Activated naive CD4-positive, alpha-beta T cell treated with anti-CD3 and anti-CD28 coated beads for 36 hours (primary cell): ENCODE measurements at regions of chr4 and their contacts with region 1.

Region 1: DNA sequence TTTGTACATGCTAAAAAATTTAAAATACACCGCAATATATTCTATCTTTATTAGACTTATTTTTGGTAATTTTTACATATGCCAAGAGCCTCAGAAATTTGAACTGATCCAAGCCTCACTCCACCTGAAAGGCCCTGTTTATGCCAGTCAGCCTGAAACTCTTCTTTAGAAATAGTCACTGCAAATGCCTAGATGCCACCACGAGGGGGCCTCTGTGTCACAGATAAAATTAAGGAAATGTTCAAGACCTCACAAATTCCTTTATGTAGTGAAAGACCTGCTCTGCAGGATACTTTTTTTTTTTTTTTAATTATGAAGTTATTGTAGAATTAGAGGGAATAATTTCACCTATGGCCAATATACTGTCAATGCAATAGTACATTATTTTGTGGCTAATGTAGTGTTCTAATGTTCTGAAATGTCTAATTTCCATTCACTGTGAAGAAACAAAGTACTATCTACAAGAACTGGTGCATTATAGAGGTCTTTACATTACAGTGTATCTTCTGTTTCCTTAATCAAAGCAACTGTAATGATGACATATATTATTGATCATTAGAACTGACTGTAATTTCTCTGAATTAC is 69.8 kb downstream of the DTHD1 start:
- DNase-seq: peak; percentile 89
- H3K4me3 Mint-ChIP-seq: no peak overlapping the region
- H3K27ac Mint-ChIP-seq: no peak overlapping the region
- H3K4me1 Mint-ChIP-seq: peaks cover 15% of the 10 kb centered on the region
- H3K27me3 Mint-ChIP-seq: peaks cover 4% of the 10 kb centered on the region

Region 2: DNA sequence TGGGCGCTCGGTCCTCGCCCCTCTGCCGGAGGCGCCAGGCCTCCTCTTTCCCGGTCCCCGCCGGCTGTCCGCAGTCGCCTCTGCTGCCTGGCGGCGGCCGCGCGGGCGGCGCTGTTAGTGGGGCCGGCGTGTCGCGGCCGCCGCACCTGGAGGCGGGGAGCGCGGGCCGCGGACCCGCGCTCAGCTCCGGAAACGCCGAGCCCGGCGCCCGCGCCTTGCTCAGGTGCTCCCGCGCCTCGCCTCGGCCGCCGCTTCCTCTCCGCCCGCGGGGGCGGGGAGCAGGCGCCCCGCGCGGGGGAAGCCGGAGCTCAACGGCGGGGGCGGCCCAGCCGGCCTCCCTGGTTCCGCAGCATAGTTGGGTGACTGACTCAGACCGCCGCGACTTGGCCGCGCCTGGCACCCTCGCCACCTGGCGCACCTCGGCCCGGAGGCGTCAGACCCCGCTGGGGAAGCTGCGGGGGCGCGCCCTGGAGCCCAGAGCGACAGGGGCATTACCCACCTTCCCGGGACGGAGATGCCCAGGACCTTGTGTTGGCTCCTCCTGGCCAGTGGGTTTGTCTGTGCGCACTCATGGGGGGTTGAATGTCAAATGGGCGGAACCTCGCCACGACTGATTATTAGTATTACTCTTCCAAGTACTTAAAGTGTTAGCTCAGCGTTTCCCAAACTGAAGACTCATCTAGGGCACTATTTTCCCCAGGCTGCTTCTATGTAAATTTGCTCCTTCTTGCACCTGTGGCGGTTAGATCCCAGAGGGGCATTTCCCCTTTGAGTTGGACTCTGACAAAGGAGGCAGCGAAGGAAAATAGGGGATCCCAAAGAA is 106.7 kb before region 1 on chr4 and contains the start of gene ARAP2:
- CTCF ChIA-PET with region 1: interaction called, 3 read pairs
- intact Hi-C with region 1: loop called (anchors 1 kb)
- DNase-seq: peak; percentile 77
- H3K4me3 Mint-ChIP-seq: peak within 1 kb of the TSS; percentile 94
- H3K27ac Mint-ChIP-seq: peak within 1 kb of the TSS; percentile 88
- H3K4me1 Mint-ChIP-seq: peaks cover 24% of the 10 kb centered on the region
- H3K27me3 Mint-ChIP-seq: no peaks in the 10 kb centered on the region
- total RNA-seq, gene ARAP2: 29.6 to 38.2 TPM

Region 3: GRCh38 chr4:36332023-36332781 is 19.0 kb before region 1 on chr4:
- CTCF ChIA-PET with region 1: interaction called, 6 read pairs
- intact Hi-C with region 1: loop called (anchors 1 kb)
- DNase-seq: peak; percentile 56
- H3K4me3 Mint-ChIP-seq: no peak overlapping the region
- H3K27ac Mint-ChIP-seq: peak overlapping the region; percentile 73
- H3K4me1 Mint-ChIP-seq: peaks cover 23% of the 10 kb centered on the region
- H3K27me3 Mint-ChIP-seq: no peaks in the 10 kb centered on the region

Region 4: DNA sequence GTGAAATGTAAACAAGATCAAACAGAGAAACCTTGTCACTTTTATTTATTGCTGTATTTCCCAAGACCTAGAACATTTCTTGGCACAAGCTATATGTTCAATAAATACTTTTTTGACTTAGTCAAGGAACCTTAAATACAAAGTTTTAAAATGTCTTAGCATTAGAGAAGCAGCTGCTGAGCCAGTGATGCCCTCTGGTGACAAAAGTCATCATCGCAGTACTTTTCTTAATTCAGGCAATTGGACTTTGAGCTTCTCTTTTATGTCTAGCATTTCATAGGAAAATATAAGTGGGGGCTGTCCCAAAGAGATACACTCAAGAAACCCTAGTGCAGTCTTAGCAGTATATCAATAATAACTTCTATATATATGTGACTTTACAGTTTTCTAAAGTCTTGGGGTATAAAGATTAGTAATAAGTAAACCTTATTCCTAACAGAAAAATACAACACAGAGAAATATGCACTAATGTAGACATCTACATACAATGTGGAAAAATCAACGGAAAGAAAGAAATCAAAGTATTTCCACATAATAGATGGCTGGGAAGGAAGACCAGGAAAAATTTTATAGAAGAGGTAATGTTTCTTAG is 48.7 kb after region 1 on chr4:
- CTCF ChIA-PET with region 1: interaction called, 92 read pairs
- intact Hi-C with region 1: loop called (anchors 1 kb)
- DNase-seq: peak; percentile 76
- H3K4me3 Mint-ChIP-seq: no peak overlapping the region
- H3K27ac Mint-ChIP-seq: no peak overlapping the region
- H3K4me1 Mint-ChIP-seq: peaks cover 19% of the 10 kb centered on the region
- H3K27me3 Mint-ChIP-seq: no peaks in the 10 kb centered on the region

Region 5: DNA sequence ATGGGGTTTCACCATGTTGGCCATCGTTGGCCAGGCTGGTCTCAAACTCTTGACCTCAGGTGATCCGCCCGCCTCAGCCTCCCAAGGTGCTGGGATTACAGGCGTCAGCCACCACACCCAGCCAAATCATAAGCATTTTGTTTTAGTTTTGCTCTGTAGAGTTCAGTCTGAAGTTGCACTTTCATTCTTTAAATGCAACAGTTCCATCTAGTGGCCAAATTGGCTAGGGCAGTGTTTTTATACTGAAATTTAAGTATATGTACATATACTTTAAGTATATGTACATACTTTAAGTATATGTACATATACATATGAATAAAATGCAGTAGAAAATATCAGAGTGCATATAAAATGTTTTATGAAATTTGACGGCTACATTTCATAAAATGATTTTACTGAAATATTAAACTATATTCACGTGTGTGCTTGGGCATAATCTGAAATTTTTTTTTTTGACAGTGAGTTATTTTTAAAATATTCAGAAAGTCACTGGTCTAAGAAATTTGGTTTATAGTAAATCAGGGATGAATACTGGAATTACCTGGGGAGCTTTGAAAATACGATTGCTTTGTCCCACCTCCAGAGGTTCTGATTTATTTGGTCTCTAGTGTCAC is 1038.9 kb after region 1 on chr4:
- CTCF ChIA-PET with region 1: no interaction called
- intact Hi-C with region 1: loop called (anchors 1 kb)
- DNase-seq: peak; percentile 56
- H3K4me3 Mint-ChIP-seq: no peak overlapping the region
- H3K27ac Mint-ChIP-seq: no peak overlapping the region
- H3K4me1 Mint-ChIP-seq: no peaks in the 10 kb centered on the region
- H3K27me3 Mint-ChIP-seq: peaks cover 5% of the 10 kb centered on the region

Region 6: DNA sequence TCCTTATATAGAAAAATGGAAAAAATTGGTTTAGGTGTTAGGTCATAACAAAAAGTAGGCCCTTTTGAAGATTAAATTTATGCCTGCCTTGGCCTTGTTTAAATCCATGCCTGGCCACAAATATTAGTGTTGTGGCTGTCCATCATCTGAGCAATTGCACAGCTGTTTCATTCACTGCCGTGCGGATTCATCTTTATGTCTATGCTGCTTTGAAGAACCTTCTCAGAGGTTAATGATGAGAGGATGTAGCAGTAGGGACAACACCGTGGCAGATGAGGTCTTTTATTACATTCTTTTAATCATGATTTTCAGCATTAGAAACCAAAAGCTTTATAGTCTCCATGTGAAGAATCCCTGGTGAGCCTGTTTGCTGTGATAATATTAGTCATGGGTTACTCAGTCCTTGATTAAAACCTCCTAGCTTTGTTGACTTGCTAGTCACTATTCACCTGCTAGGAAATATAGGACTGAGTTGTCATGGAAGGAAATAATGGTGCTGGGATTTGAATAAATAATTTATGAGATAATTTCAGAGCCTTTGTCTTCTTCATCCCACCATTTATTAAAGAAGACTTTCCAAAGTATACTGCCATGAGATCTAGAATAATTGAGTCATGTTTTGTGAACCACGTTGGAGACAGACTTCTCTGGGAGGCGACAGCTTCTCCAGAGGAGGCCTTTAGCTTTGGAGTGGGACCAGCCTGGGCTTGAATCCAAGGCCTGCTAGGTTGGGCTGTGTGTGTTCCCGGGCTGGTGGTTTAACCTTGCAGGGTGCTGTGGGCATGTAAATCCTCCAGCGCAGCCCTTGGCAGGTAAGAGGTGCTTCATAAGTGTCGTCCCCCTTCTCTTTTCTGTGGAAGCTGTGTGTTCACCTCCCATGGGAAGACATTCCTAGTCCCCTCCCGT is 1662.5 kb after region 1 on chr4:
- CTCF ChIA-PET with region 1: no interaction called
- intact Hi-C with region 1: no loop called
- DNase-seq: no peak
- H3K4me3 Mint-ChIP-seq: no peak overlapping the region
- H3K27ac Mint-ChIP-seq: no peak overlapping the region
- H3K4me1 Mint-ChIP-seq: peaks cover 8% of the 10 kb centered on the region
- H3K27me3 Mint-ChIP-seq: no peaks in the 10 kb centered on the region